Activated CD8-positive, alpha-beta memory T cell treated with anti-CD3 and anti-CD28 coated beads, Interleukin-2, amount 10 ng/mL, durations not matched to agents 7 days and 5 days (primary cell): ENCODE measurements at regions of chr19 and their contacts with region 1.

Region 1: GRCh38 chr19:48738557-48739399 is 1.6 kb downstream of the RASIP1 start:
- DNase-seq: peak; percentile 94
- ATAC-seq: peak; percentile 97
- H3K4me3 Mint-ChIP-seq: peak overlapping the region; percentile 15
- H3K27ac Mint-ChIP-seq: peak overlapping the region; percentile 11
- H3K4me1 Mint-ChIP-seq: peaks cover 14% of the 10 kb centered on the region
- H3K27me3 Mint-ChIP-seq: peaks cover 17% of the 10 kb centered on the region

Region 2: DNA sequence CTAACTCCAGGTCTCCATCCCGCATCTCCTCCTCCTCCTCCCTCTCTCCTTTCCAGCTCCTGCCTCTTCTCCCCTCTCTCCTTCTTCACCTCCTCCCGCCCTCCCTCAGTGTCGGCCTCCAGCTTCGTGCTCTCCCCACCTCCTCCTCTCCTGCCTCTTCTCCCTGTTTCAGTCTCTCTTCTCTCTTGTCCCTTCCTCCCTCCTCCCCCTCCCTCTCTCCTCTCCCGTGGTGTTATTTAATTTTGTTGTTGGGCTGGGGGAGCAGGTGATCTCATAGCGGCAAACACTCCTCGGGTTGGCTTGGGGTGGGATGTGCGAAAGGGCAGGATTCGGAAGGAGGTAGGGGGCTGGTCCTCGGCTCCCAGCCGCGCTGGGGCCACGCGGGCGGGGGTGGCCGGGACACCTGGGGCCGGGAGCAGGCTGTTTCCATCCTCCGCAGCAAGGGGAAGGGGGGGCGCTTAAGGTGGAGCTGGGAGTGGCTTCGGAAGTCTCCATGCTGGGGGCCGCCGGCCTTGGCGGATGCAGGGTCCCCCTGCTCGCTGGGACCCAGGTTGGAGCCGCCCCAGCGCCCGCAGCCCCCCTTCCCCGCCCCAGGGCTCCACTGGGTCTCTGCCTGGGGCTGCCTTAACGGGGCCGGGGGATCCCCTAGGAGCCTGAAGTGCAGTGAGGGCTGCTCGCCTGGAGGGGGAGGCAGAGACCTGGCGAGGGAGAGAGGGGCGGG is 92.6 kb before region 1 on chr19 and contains the start of gene CA11:
- CTCF ChIA-PET with region 1: interaction called, 27 read pairs
- DNase-seq: peak; percentile 94
- ATAC-seq: peak; percentile 90
- H3K4me3 Mint-ChIP-seq: peak within 1 kb of the TSS; percentile 74
- H3K27ac Mint-ChIP-seq: peak within 1 kb of the TSS; percentile 77
- H3K4me1 Mint-ChIP-seq: peaks cover 33% of the 10 kb centered on the region
- H3K27me3 Mint-ChIP-seq: peaks cover 2% of the 10 kb centered on the region
- total RNA-seq, gene CA11: 6.0 to 7.2 TPM

Region 3: DNA sequence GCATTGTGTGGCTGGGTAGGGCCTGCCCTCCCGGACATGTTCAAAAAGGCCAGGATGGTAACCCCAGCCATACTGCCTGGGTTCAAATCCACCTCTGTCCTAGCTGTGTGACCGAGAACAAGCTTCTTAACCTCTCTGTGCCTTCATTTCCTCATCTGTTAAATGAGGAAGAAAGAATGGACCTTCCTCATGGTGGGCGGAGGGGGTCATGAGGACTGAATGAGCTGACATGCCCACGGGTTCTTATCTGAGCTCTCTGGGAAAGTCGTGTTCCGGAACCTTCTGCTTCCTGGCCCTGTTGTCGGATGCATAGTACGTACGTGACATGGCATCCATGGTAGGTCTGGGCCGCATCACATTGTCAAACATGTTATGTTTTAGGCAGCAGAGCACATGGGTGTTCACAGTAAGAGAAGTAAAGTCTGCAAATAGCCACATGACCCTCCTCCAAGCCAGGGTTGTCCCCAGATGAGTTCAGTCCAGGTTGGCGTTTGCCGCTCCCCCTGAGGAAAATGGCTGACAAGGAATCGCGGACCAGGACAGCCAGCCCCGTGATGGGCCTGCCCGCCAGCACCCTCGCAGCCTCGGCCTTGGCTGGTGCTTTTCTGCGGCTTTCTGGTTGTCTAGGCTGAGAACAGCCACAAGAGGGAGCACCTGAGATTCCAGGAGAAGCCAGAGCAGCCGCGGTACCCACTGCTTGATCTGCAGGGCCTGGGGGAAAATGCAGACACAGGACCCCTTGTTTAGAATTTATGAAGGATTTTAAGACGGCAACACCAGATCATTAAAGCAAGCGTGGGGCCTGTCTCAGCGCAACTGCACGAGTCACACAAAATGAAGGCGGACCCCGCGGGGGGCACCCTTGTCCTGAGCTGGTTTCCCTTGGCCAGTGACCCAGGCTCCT is 63.6 kb before region 1 on chr19:
- CTCF ChIA-PET with region 1: interaction called, 20 read pairs
- DNase-seq: peak; percentile 83
- ATAC-seq: peak; percentile 85
- H3K4me3 Mint-ChIP-seq: no peak overlapping the region
- H3K27ac Mint-ChIP-seq: no peak overlapping the region
- H3K4me1 Mint-ChIP-seq: peaks cover 6% of the 10 kb centered on the region
- H3K27me3 Mint-ChIP-seq: peaks cover 3% of the 10 kb centered on the region

Region 4: GRCh38 chr19:48724796-48725753 is 13.7 kb before region 1 on chr19:
- CTCF ChIA-PET with region 1: interaction called, 42 read pairs
- DNase-seq: no peak
- ATAC-seq: peak; percentile 17
- H3K4me3 Mint-ChIP-seq: no peak overlapping the region
- H3K27ac Mint-ChIP-seq: peak overlapping the region; percentile 73
- H3K4me1 Mint-ChIP-seq: peaks cover 26% of the 10 kb centered on the region
- H3K27me3 Mint-ChIP-seq: no peaks in the 10 kb centered on the region